ENCODE measurements at regions of chr16 and their contacts with region 1.

Region 1: GRCh38 chr16:1572671-1573070 is 39.2 kb downstream of the IFT140 start:
- DNase-seq: no peak
- ATAC-seq: no peak
- H3K4me3 ChIP-seq: no peak overlapping the region
- H3K4me3 Mint-ChIP-seq: no peak overlapping the region
- H3K27ac ChIP-seq: no peak overlapping the region
- H3K27ac Mint-ChIP-seq: no peak overlapping the region
- H3K4me1 ChIP-seq: no peaks in the 10 kb centered on the region
- H3K4me1 Mint-ChIP-seq: no peaks in the 10 kb centered on the region
- H3K27me3 ChIP-seq: peaks cover 0 to 12% of the 10 kb centered on the region in 2 experiments
- H3K27me3 Mint-ChIP-seq: no peaks in the 10 kb centered on the region

Region 2: DNA sequence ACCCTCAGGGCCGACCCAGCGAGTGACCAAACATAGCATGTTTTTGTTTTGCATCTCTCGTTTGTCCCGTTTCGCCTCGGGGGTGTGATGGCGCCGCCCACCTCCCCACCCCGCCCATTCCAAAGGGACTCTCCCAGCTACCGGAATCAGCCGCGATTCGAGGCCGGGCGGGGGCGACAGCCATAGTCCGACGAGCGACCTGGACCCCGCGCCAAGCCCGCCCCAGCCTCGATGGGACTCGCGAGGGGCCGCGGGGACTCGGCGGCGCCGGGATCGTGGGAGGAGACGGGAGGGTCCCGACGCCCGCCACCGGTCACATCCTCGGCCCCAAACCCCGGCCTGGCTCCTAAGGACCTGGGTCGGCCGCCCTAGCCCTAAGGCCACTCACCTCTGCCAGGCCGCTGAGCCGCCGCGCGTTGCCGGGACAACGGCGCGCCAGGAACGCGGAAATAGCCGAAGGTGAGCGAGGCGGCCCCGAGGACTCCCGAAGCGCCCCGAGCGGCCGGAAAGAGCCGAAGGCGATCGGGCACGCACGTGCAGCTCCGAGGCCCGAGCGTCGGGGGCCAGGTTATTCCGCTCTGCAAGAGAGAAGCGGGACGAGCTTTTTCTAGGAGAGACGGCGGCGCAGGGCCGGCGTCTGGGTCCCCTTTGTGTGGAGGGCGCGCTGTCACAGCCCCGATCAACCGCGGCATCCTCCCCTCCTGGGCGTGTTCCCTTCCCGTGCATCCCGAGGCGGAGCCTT is 37.8 kb after region 1 on chr16:
- CTCF ChIA-PET with region 1: no interaction called
- POLR2A ChIA-PET with region 1: no interaction called
- DNase-seq: peak; percentile 76 to 95 (median 88)
- ATAC-seq: peak; percentile 62 to 64 (median 62)
- H3K4me3 ChIP-seq: peak overlapping the region; percentile 51 to 53
- H3K4me3 Mint-ChIP-seq: peak overlapping the region; percentile 67 to 83 (median 78)
- H3K27ac ChIP-seq: peak overlapping the region; percentile 68
- H3K27ac Mint-ChIP-seq: peak overlapping the region; percentile 89 to 98
- H3K4me1 ChIP-seq: peaks cover 19 to 48% of the 10 kb centered on the region in 2 experiments
- H3K4me1 Mint-ChIP-seq: peaks cover 23 to 32% (median 29%) of the 10 kb centered on the region in 3 donors
- H3K27me3 ChIP-seq: peaks cover 0 to 25% of the 10 kb centered on the region in 2 experiments
- H3K27me3 Mint-ChIP-seq: peaks cover 0 to 5% of the 10 kb centered on the region in 2 donors

Region 3: GRCh38 chr16:2437032-2437790 is 864.5 kb after region 1 on chr16:
- CTCF ChIA-PET with region 1: no interaction called
- POLR2A ChIA-PET with region 1: interaction called in 1 of 2 experiments, 11 read pairs
- DNase-seq: no peak
- ATAC-seq: no peak
- H3K4me3 ChIP-seq: no peak overlapping the region
- H3K4me3 Mint-ChIP-seq: no peak overlapping the region
- H3K27ac ChIP-seq: no peak overlapping the region
- H3K27ac Mint-ChIP-seq: no peak overlapping the region
- H3K4me1 ChIP-seq: peaks cover 0 to 9% of the 10 kb centered on the region in 2 experiments
- H3K4me1 Mint-ChIP-seq: peaks cover 7 to 12% (median 10%) of the 10 kb centered on the region in 3 donors
- H3K27me3 ChIP-seq: no peaks in the 10 kb centered on the region
- H3K27me3 Mint-ChIP-seq: no peaks in the 10 kb centered on the region